ENCODE measurements at regions of chr15 and their contacts with region 1.

Region 1: DNA sequence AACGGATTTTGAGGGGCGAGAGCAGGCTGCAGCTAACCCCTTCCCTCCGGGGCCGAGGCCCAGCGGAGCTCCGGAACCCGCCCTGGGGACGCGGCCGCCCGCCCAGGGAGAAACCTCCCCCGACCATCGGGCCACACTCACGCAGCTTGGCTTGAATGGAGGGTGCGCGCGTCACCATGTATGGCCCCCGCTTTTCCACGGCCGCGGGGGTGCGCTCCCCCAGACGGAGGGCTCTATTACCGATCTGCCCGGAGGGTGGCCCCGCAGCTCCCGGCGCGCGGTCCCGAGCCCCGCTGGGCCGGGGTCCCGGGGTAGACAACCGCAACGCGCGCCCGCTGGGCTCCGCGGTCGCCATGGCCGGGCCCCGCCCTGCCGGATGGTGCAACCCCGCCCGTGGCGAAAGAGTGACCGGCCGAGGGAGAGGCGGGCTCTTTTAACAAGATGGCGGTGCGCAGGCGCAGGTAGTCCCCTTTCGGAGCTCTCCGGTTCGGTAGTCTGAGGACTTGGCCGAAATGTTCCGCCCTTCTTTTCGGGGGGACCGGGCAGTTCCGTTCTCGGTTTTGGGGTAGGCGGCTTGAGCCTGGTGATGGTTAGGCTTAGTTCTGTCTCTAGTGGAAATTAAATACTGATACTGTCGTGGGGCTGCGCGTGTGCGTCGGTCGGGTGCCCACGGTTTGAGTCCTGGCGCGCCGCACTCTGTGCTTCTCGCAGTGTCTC is at the start of gene FAM219B:
- DNase-seq: peak; percentile 88
- ATAC-seq: peak; percentile 89
- H3K4me3 Mint-ChIP-seq: peak within 1 kb of the TSS; percentile 88
- H3K27ac Mint-ChIP-seq: peak within 1 kb of the TSS; percentile 89
- H3K4me1 Mint-ChIP-seq: peaks cover 26% of the 10 kb centered on the region
- H3K27me3 Mint-ChIP-seq: no peaks in the 10 kb centered on the region
- CTCF ChIP-seq: no peak
- total RNA-seq, gene FAM219B: 36.5 to 44.7 TPM

Region 2: DNA sequence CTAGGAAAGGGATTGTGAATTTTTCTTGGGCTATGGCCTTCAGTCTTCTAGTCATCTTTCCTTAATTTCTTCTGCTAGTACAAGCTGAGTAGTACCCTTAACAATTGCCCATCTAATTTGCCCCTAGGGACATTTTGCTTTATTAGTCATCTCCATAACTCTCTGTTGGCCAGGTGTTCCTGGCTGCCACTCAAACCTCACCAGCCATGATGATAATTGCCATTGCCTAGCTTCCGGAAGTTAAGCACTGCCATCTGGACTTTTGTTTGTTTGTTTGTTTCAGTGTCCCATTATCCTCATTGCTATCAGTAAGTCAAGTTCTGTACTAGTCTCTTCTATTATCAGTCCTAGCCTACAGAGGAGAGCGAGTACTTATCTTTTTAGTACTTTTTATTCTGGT is 409.0 kb before region 1 on chr15:
- CTCF ChIA-PET with region 1: no interaction called
- POLR2A ChIA-PET with region 1: no interaction called
- intact Hi-C with region 1: no loop called
- DNase-seq: no peak
- ATAC-seq: no peak
- H3K4me3 Mint-ChIP-seq: no peak overlapping the region
- H3K27ac Mint-ChIP-seq: no peak overlapping the region
- H3K4me1 Mint-ChIP-seq: no peaks in the 10 kb centered on the region
- H3K27me3 Mint-ChIP-seq: no peaks in the 10 kb centered on the region
- CTCF ChIP-seq: no peak

Region 3: GRCh38 chr15:74781431-74782258 is 125.0 kb before region 1 on chr15 and contains the start of gene CSK:
- CTCF ChIA-PET with region 1: interaction called, 25 read pairs
- POLR2A ChIA-PET with region 1: no interaction called
- intact Hi-C with region 1: no loop called
- DNase-seq: peak; percentile 76
- ATAC-seq: peak; percentile 40
- H3K4me3 Mint-ChIP-seq: peak within 1 kb of the TSS; percentile 98
- H3K27ac Mint-ChIP-seq: peak within 1 kb of the TSS; percentile 98
- H3K4me1 Mint-ChIP-seq: peaks cover 46% of the 10 kb centered on the region
- H3K27me3 Mint-ChIP-seq: no peaks in the 10 kb centered on the region
- CTCF ChIP-seq: peak; percentile 66
- total RNA-seq, gene CSK: 254 to 260 TPM

Region 4: DNA sequence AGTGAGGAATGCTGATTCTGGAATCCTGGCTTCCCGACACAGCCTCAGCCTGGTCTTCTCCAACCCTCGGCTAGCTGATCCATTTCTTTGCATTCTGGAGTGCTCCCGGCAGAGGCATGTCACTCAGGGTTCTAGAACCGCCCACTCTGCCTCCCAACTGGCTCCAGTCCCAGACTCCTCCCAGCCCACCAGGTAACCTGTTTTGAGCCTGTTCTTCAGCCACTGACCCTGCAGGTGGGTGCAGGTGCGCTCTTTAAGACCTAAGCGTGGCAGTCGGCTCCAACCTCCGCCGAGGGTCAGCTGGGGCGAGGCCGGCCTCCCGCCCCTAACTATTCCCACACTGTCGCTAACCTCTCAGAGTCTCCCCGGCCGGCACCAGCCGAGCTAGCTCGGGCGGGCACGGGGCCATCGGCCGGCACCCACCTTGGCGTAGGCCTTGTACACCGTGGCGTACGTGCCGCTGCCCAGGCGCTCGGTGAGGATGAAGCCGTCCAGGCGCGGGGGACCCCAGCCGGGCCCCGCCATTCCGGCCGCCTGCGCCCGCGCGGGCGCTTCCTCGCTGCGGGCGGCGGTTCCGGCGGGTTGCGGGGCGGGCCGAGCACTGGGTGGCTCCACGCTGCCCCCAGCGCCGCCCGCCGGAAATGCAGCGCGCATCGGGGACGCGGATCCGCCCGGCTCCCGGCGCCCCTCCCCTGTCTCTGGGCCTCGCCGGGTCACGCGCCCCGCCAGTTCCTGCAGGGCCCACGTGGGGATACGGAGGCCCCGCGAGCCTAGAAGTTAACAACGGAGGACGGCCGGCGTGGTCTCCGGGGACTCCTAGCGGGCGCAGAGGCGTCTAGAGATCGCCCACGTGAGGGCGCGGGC is 63.8 kb before region 1 on chr15 and contains the start of gene ULK3:
- CTCF ChIA-PET with region 1: interaction called, 29 read pairs
- POLR2A ChIA-PET with region 1: interaction called, 7 read pairs
- intact Hi-C with region 1: no loop called
- DNase-seq: peak; percentile 94
- ATAC-seq: peak; percentile 92
- H3K4me3 Mint-ChIP-seq: peak within 1 kb of the TSS; percentile 90
- H3K27ac Mint-ChIP-seq: peak within 1 kb of the TSS; percentile 94
- H3K4me1 Mint-ChIP-seq: peaks cover 44% of the 10 kb centered on the region
- H3K27me3 Mint-ChIP-seq: no peaks in the 10 kb centered on the region
- CTCF ChIP-seq: peak; percentile 89
- total RNA-seq, gene ULK3: 45.9 to 49.3 TPM

Region 5: GRCh38 chr15:74873036-74873755 is 33.4 kb before region 1 on chr15 and contains the start of gene SCAMP2:
- CTCF ChIA-PET with region 1: interaction called, 37 read pairs
- POLR2A ChIA-PET with region 1: interaction called, 9 read pairs
- intact Hi-C with region 1: no loop called
- DNase-seq: peak; percentile 96
- ATAC-seq: peak; percentile 93
- H3K4me3 Mint-ChIP-seq: peak within 1 kb of the TSS; percentile 95
- H3K27ac Mint-ChIP-seq: peak within 1 kb of the TSS; percentile 92
- H3K4me1 Mint-ChIP-seq: peaks cover 36% of the 10 kb centered on the region
- H3K27me3 Mint-ChIP-seq: no peaks in the 10 kb centered on the region
- CTCF ChIP-seq: no peak
- total RNA-seq, gene SCAMP2: 57.8 to 58.9 TPM

Region 6: GRCh38 chr15:74889883-74890664 is 16.5 kb before region 1 on chr15 and contains the start of gene MPI:
- CTCF ChIA-PET with region 1: interaction called, 52 read pairs
- POLR2A ChIA-PET with region 1: interaction called, 20 read pairs
- intact Hi-C with region 1: no loop called
- DNase-seq: peak; percentile 96
- ATAC-seq: peak; percentile 98
- H3K4me3 Mint-ChIP-seq: peak within 1 kb of the TSS; percentile 78
- H3K27ac Mint-ChIP-seq: peak within 1 kb of the TSS; percentile 87
- H3K4me1 Mint-ChIP-seq: peaks cover 39% of the 10 kb centered on the region
- H3K27me3 Mint-ChIP-seq: no peaks in the 10 kb centered on the region
- CTCF ChIP-seq: no peak
- total RNA-seq, gene MPI: 67.1 to 74.3 TPM

Region 7: GRCh38 chr15:74937596-74938296 is 31.1 kb after region 1 on chr15 and contains the start of gene COX5A:
- CTCF ChIA-PET with region 1: interaction called, 23 read pairs
- POLR2A ChIA-PET with region 1: interaction called, 3 read pairs
- intact Hi-C with region 1: no loop called
- DNase-seq: peak; percentile 95
- ATAC-seq: peak; percentile 94
- H3K4me3 Mint-ChIP-seq: peak within 1 kb of the TSS; percentile 87
- H3K27ac Mint-ChIP-seq: peak within 1 kb of the TSS; percentile 94
- H3K4me1 Mint-ChIP-seq: peaks cover 20% of the 10 kb centered on the region
- H3K27me3 Mint-ChIP-seq: no peaks in the 10 kb centered on the region
- CTCF ChIP-seq: no peak
- total RNA-seq, gene COX5A: 342 TPM

Region 8: DNA sequence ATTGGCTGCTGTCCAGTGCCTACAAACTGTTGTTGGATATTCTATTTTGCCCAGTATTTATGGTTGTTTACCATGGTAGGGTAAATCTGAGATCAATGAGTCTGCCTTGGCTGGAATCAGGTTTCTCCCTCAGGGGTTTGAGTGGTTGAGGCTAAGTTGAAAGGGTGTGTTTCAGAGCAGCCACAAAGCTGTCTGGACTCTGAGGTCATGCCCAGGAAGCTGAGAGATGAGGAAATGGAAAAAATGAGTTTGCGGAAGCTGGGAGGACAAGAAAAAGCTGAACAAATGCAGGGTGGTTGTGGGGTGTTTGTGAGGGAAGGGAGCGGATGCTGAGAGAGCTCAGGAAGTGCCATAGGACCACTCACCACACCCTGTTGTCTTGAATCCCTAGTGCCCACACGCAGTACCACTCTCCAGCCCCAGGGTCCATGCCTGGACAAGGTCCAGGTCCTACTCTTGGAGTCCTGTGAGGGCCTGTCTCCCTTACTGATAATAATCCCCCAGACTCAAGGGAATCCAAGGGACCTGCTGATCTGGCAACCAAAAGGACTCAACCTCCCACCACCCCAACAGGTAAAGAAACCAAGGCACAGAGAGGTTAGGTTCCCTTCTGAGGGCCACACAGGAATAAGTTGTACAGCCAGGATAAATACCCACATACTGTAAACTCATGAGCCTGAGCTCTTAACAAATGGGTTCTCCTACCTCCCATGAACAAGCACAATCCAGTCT is 198.4 kb after region 1 on chr15:
- CTCF ChIA-PET with region 1: no interaction called
- POLR2A ChIA-PET with region 1: no interaction called
- intact Hi-C with region 1: no loop called
- DNase-seq: peak; percentile 66
- ATAC-seq: peak; percentile 40
- H3K4me3 Mint-ChIP-seq: peak overlapping the region; percentile 28
- H3K27ac Mint-ChIP-seq: peak overlapping the region; percentile 64
- H3K4me1 Mint-ChIP-seq: peaks cover 30% of the 10 kb centered on the region
- H3K27me3 Mint-ChIP-seq: peaks cover 10% of the 10 kb centered on the region
- CTCF ChIP-seq: no peak

Region 9: GRCh38 chr15:75397494-75397893 is 490.9 kb after region 1 on chr15:
- CTCF ChIA-PET with region 1: no interaction called
- POLR2A ChIA-PET with region 1: no interaction called
- intact Hi-C with region 1: no loop called
- DNase-seq: no peak
- ATAC-seq: no peak
- H3K4me3 Mint-ChIP-seq: no peak overlapping the region
- H3K27ac Mint-ChIP-seq: no peak overlapping the region
- H3K4me1 Mint-ChIP-seq: peaks cover 6% of the 10 kb centered on the region
- H3K27me3 Mint-ChIP-seq: no peaks in the 10 kb centered on the region
- CTCF ChIP-seq: no peak